Activated naive CD4-positive, alpha-beta T cell treated with anti-CD3 and anti-CD28 coated beads for 36 hours (primary cell): ENCODE measurements at regions of chr18 and their contacts with region 1.

Region 1: GRCh38 chr18:63949068-63949737 is at the start of gene HMSD:
- DNase-seq: peak; percentile 89
- H3K4me3 Mint-ChIP-seq: peak within 1 kb of the TSS; percentile 82
- H3K27ac Mint-ChIP-seq: peak within 1 kb of the TSS; percentile 86
- H3K4me1 Mint-ChIP-seq: peaks cover 43% of the 10 kb centered on the region
- H3K27me3 Mint-ChIP-seq: peaks cover 26% of the 10 kb centered on the region
- total RNA-seq, gene HMSD: 25.0 to 31.7 TPM

Region 2: DNA sequence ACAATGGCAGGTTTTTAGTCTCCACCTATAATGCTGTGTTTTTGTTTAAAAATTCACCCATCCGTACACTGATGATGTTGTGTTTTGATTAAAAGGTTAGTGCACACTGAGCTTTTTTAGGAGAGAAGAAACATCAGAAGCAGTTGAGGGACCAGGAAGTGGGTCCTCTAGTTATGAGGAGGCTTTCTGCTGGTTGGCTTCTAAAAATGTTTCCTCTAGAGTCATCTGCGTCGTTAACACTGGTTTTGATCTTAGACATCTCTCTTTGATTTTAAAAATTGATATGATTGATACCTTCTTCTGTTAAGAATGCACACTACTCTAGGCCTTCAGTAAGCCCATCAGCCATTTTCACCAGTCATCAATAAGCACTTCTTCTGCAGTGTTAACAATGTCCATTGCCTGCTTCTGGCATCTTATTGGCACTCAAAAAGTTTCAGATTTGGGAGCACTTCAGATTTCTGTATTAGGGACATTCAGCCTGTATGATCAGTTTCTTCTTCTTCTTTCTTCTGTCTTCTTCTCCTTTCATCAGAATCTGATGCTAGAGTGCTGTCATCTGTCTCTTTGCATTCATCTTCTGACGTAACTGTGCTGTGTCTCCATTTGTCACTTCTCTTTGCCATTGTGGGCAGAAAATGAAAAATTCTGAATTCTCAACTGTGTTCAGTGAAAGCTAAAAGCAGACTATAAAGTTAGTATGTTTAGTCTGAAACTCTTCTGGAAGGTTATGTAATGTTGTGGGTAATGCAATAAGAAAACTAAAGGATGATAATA is 1177.5 kb before region 1 on chr18:
- CTCF ChIA-PET with region 1: no interaction called
- intact Hi-C with region 1: loop called (anchors 5 kb)
- DNase-seq: peak; percentile 19
- H3K4me3 Mint-ChIP-seq: no peak overlapping the region
- H3K27ac Mint-ChIP-seq: no peak overlapping the region
- H3K4me1 Mint-ChIP-seq: peaks cover 17% of the 10 kb centered on the region
- H3K27me3 Mint-ChIP-seq: no peaks in the 10 kb centered on the region

Region 3: DNA sequence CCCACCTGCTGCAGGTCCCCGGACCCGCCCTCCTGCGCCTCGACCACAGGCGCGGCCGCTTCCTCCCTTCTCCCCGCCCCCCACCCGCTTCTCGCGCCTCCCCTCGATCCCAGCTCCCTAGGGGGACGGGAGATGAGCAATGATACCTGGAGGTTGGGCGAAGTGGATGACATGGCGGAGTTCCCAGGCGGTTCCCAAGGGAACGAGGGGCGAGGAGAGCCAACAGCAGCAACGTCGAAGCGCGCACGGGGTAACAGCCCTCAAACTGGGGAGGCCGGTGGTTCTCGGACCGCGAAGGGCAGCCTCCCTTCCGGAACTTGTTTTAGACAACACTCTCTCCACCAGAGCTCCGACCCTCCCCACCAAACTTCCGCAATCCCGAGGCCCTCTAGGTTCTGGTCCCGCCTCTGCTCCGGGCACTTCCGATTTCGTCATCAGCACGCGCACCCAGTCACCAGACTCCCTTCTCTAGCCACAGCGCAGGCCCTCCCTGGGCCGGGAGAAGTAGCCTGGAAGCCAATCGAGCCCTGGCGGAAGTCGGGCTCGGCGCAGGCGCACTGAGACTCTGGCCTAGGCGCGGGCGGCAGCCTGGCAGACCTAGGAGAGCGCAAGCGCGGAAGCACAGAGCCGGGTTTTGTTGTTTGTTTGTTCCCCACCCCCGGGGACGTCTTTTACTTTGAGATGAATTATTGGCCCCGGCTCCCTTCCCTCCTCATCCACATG is 527.0 kb before region 1 on chr18 and contains the start of gene VPS4B:
- CTCF ChIA-PET with region 1: no interaction called
- intact Hi-C with region 1: loop called (anchors 1 kb)
- DNase-seq: peak; percentile 100
- H3K4me3 Mint-ChIP-seq: peak within 1 kb of the TSS; percentile 83
- H3K27ac Mint-ChIP-seq: peak within 1 kb of the TSS; percentile 95
- H3K4me1 Mint-ChIP-seq: peaks cover 28% of the 10 kb centered on the region
- H3K27me3 Mint-ChIP-seq: no peaks in the 10 kb centered on the region
- total RNA-seq, gene VPS4B: 28.7 to 30.1 TPM

Region 4: DNA sequence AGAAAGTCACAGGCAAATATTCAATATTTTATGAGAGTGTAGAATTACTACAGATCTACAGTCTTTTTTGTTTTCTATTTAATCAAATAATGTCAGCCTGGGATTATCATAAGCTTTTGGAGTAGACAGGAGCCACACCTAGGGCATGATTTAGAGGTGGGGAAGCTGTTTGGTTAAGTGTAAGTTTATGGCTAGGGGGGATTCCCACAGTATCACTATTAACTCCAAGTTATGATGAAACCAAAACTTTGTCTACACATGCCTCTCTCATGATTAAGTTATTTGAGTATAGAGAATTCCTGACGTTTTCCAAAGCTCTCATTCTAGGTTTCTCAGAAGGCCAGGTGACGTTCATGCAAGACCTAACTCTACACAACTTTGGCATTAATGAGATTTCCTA is 39.3 kb before region 1 on chr18:
- CTCF ChIA-PET with region 1: no interaction called
- intact Hi-C with region 1: loop called (anchors 2 kb)
- DNase-seq: no peak
- H3K4me3 Mint-ChIP-seq: no peak overlapping the region
- H3K27ac Mint-ChIP-seq: no peak overlapping the region
- H3K4me1 Mint-ChIP-seq: no peaks in the 10 kb centered on the region
- H3K27me3 Mint-ChIP-seq: peaks cover 37% of the 10 kb centered on the region

Region 5: DNA sequence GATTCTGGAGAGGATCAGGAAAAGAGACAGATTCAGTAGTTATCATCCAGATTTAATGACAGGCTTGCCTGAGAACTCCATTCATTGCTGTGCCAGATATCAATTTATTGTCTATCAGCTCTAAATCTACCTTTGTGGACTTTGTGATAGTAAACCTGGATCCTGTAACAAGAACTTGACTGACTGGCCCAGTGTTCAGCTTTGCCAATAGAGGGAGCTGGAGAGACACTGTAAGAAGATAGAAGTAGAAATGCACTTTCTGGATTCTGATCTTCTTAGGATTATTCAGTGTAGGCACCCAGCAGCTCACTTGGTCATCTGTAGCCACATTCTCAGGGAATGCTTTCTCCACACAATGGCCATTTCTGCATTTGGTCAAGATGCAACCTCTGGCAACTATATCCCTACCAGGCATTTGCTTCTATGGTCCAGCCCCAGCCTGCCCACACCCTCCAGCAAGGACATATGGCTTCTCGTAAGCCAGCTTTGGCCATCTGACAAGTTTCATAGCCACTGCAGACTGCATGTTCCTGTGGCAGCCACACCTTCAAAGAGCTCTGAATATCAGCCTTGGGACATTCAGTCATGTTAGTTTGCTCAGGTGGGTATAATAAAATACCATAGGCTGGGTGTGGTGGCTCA is 14.5 kb after region 1 on chr18:
- CTCF ChIA-PET with region 1: interaction called, 31 read pairs
- intact Hi-C with region 1: loop called (anchors 1 kb)
- DNase-seq: peak; percentile 70
- H3K4me3 Mint-ChIP-seq: no peak overlapping the region
- H3K27ac Mint-ChIP-seq: no peak overlapping the region
- H3K4me1 Mint-ChIP-seq: peaks cover 16% of the 10 kb centered on the region
- H3K27me3 Mint-ChIP-seq: peaks cover 11% of the 10 kb centered on the region